ENCODE measurements at regions of chr3 and their contacts with region 1.

Region 1: DNA sequence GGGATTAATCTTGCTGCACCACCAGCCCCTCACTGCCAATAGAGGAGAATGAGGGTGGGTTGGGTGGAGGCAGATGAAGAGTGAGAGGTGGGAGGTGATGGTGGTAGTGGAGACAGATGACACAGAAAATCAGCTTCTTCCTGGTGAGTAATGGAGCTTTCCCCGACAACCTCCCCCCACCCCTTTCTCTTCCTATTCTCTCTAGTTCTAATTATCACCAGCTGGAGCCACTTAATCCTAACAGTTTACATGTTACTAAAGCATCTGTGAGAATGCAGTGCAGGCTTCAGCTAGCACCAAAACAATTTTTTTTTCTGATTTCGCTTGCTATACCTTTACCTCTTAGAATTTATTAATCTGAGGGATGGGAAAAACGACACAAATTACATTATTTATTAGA is 116.1 kb upstream of the DNAJC19 start:
- DNase-seq: no peak

Region 2: GRCh38 chr3:180912304-180913296 is 193.0 kb before region 1 on chr3 and contains the start of gene FXR1:
- intact Hi-C with region 1: no loop called
- DNase-seq: peak; percentile 96
- total RNA-seq, gene FXR1: 87.7 to 96.8 TPM

Region 3: DNA sequence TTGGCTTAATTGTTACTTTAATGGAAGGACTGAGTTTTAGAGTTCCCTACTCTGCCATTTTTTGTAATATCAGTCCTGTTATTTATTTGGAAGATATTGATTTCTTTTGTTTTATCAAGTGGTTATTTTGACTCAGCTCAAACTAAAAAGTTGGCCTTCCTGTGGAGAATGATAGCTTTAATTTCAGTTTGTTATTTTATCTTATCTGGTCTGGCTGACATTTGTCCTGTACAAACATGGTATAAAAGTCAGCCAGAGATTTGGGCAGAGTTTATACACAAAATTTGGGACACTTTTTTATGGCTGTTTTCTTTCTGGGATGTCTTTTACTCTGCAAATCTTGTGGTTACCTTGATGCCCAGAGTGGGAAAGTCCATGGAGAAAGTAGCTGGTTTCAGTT is 74.7 kb before region 1 on chr3:
- intact Hi-C with region 1: no loop called
- DNase-seq: no peak

Region 4: GRCh38 chr3:182464513-182465145 is 1359.0 kb after region 1 on chr3:
- intact Hi-C with region 1: loop called in 1 of 2 experiments (anchors 5 kb)
- DNase-seq: no peak